CD4-positive, alpha-beta T cell (primary cell): ENCODE measurements at regions of chr2 and their contacts with region 1.

Region 1: GRCh38 chr2:199955339-199956261 is at the starts of genes MAIP1 and TYW5:
- DNase-seq: peak; percentile 68 to 88 (median 72)
- ATAC-seq: peak; percentile 87
- H3K4me3 ChIP-seq: peak within 1 kb of the TSS; percentile 83
- H3K4me3 Mint-ChIP-seq: peak within 1 kb of the TSS; percentile 96
- H3K27ac ChIP-seq: peak within 1 kb of the TSS; percentile 68 to 83
- H3K27ac Mint-ChIP-seq: peak within 1 kb of the TSS; percentile 91
- H3K4me1 ChIP-seq: peaks cover 30% of the 10 kb centered on the region
- H3K4me1 Mint-ChIP-seq: peaks cover 70% of the 10 kb centered on the region
- H3K27me3 ChIP-seq: no peaks in the 10 kb centered on the region
- H3K27me3 Mint-ChIP-seq: no peaks in the 10 kb centered on the region
- CTCF ChIP-seq: no peak
- total RNA-seq, gene MAIP1: 34.6 to 35.8 TPM
- total RNA-seq, gene TYW5: 15.0 to 16.0 TPM

Region 2: DNA sequence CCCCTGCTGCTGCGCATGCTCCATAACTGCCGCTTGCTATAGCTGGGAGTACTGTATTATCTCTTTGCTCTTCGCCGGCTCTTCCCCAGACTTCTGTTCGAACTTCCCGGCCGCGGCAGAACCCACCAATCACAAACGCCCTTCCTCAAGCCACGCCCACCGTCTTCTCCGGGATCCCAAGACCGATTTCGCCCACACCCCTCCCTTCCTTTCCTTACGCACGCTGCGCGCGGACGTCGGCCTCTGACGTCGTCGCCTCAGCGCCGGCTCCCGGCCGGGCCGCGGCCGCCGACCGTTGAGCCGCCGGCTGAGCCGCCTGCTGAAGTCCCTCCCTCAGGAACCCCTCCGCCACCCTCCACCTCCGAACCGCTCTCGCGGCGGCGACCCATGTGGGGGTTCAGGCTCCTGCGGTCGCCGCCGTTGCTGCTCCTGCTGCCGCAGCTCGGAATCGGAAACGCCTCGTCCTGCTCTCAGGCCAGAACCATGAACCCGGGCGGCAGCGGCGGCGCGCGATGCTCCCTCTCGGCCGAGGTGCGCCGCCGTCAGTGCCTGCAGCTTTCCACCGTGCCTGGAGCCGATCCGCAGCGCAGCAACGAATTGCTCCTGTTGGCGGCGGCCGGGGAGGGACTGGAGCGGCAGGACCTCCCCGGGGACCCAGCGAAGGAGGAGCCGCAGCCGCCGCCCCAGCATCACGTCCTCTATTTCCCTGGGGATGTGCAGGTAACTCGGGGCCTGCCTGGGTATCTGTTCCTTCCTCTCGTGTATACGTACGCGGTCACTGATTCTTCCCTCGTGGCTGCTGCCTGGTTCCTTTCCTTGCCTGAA is 44.3 kb before region 1 on chr2 and contains the start of gene C2orf69:
- CTCF ChIA-PET with region 1: interaction called, 4 read pairs
- POLR2A ChIA-PET with region 1: no interaction called
- intact Hi-C with region 1: loop called (anchors 2 kb)
- DNase-seq: peak; percentile 78 to 97 (median 88)
- ATAC-seq: peak; percentile 79
- H3K4me3 ChIP-seq: peak within 1 kb of the TSS; percentile 78
- H3K4me3 Mint-ChIP-seq: peak within 1 kb of the TSS; percentile 99
- H3K27ac ChIP-seq: peak within 1 kb of the TSS; percentile 67 to 80
- H3K27ac Mint-ChIP-seq: peak within 1 kb of the TSS; percentile 95
- H3K4me1 ChIP-seq: peaks cover 17% of the 10 kb centered on the region
- H3K4me1 Mint-ChIP-seq: peaks cover 40% of the 10 kb centered on the region
- H3K27me3 ChIP-seq: no peaks in the 10 kb centered on the region
- H3K27me3 Mint-ChIP-seq: no peaks in the 10 kb centered on the region
- CTCF ChIP-seq: no peak
- total RNA-seq, gene C2orf69: 12.5 to 13.7 TPM

Region 3: GRCh38 chr2:199973703-199974102 is 18.1 kb after region 1 on chr2:
- CTCF ChIA-PET with region 1: no interaction called
- POLR2A ChIA-PET with region 1: no interaction called
- intact Hi-C with region 1: no loop called
- DNase-seq: no peak
- ATAC-seq: no peak
- H3K4me3 ChIP-seq: no peak overlapping the region
- H3K4me3 Mint-ChIP-seq: no peak overlapping the region
- H3K27ac ChIP-seq: no peak overlapping the region
- H3K27ac Mint-ChIP-seq: no peak overlapping the region
- H3K4me1 ChIP-seq: no peaks in the 10 kb centered on the region
- H3K4me1 Mint-ChIP-seq: no peaks in the 10 kb centered on the region
- H3K27me3 ChIP-seq: no peaks in the 10 kb centered on the region
- H3K27me3 Mint-ChIP-seq: no peaks in the 10 kb centered on the region
- CTCF ChIP-seq: peak; percentile 30

Region 4: GRCh38 chr2:200172944-200173581 is 217.5 kb after region 1 on chr2:
- CTCF ChIA-PET with region 1: no interaction called
- POLR2A ChIA-PET with region 1: no interaction called
- intact Hi-C with region 1: no loop called
- DNase-seq: no peak
- ATAC-seq: no peak
- H3K4me3 ChIP-seq: no peak overlapping the region
- H3K4me3 Mint-ChIP-seq: no peak overlapping the region
- H3K27ac ChIP-seq: no peak overlapping the region
- H3K27ac Mint-ChIP-seq: no peak overlapping the region
- H3K4me1 ChIP-seq: no peaks in the 10 kb centered on the region
- H3K4me1 Mint-ChIP-seq: no peaks in the 10 kb centered on the region
- H3K27me3 ChIP-seq: peaks cover 0 to under 1% of the 10 kb centered on the region in 2 experiments
- H3K27me3 Mint-ChIP-seq: peaks cover 3% of the 10 kb centered on the region
- CTCF ChIP-seq: no peak

Region 5: GRCh38 chr2:201780674-201781581 is 1825.3 kb after region 1 on chr2 and contains the start of gene ALS2:
- CTCF ChIA-PET with region 1: no interaction called
- POLR2A ChIA-PET with region 1: no interaction called
- intact Hi-C with region 1: loop called in 1 of 2 experiments (anchors 10 kb)
- DNase-seq: peak; percentile 86 to 96 (median 92)
- ATAC-seq: peak; percentile 90
- H3K4me3 ChIP-seq: peak within 1 kb of the TSS; percentile 66
- H3K4me3 Mint-ChIP-seq: peak within 1 kb of the TSS; percentile 98
- H3K27ac ChIP-seq: peak within 1 kb of the TSS; percentile 77 to 88
- H3K27ac Mint-ChIP-seq: peak within 1 kb of the TSS; percentile 93
- H3K4me1 ChIP-seq: peaks cover 15% of the 10 kb centered on the region
- H3K4me1 Mint-ChIP-seq: peaks cover 20% of the 10 kb centered on the region
- H3K27me3 ChIP-seq: no peaks in the 10 kb centered on the region
- H3K27me3 Mint-ChIP-seq: no peaks in the 10 kb centered on the region
- CTCF ChIP-seq: no peak
- total RNA-seq, gene ALS2: 7.0 to 7.2 TPM